Activated CD4-positive, alpha-beta T cell treated with anti-CD3 and anti-CD28 coated beads for 36 hours (primary cell): ENCODE measurements at regions of chr16 and their contacts with region 1.

Region 1: GRCh38 chr16:56450986-56451752 is at the starts of genes NUDT21 and OGFOD1:
- DNase-seq: peak; percentile 95
- ATAC-seq: peak; percentile 97
- H3K4me3 Mint-ChIP-seq: peak within 1 kb of the TSS; percentile 84
- H3K27ac Mint-ChIP-seq: peak within 1 kb of the TSS; percentile 93
- H3K4me1 Mint-ChIP-seq: peaks cover 51% of the 10 kb centered on the region
- H3K27me3 Mint-ChIP-seq: no peaks in the 10 kb centered on the region
- total RNA-seq, gene NUDT21: 333 to 349 TPM
- total RNA-seq, gene OGFOD1: 56.2 to 64.1 TPM

Region 2: GRCh38 chr16:56356276-56357240 is 94.6 kb before region 1 on chr16:
- CTCF ChIA-PET with region 1: interaction called, 3 read pairs
- POLR2A ChIA-PET with region 1: no interaction called
- intact Hi-C with region 1: loop called (anchors 1 kb)
- DNase-seq: peak; percentile 77
- ATAC-seq: peak; percentile 84
- H3K4me3 Mint-ChIP-seq: peak overlapping the region; percentile 78
- H3K27ac Mint-ChIP-seq: peak overlapping the region; percentile 98
- H3K4me1 Mint-ChIP-seq: peaks cover 29% of the 10 kb centered on the region
- H3K27me3 Mint-ChIP-seq: no peaks in the 10 kb centered on the region

Region 3: DNA sequence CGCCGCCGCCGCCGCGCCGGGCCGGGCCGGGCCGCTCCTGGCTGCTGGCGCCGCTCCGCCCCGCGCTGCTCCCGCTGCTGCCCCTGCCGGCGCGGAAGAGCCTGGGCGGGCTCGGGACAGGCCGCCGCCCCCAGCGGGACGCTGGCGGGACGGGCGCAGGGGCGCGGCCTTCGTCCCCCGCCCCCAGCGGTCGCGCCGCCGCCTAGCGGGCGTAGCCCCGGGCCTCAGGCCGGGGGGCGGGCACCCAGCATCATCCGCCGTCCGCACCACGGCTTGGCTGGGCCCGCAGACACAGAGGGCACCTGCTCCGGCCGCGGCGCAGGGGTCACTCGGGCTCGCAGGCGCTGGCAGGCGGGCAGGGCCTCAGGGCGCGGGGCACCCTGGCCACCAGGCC is 25.7 kb before region 1 on chr16 and contains the start of gene AMFR:
- CTCF ChIA-PET with region 1: interaction called, 9 read pairs
- POLR2A ChIA-PET with region 1: interaction called, 6 read pairs
- intact Hi-C with region 1: loop called (anchors 1 kb)
- DNase-seq: peak; percentile 80
- ATAC-seq: peak; percentile 97
- H3K4me3 Mint-ChIP-seq: peak within 1 kb of the TSS; percentile 90
- H3K27ac Mint-ChIP-seq: peak within 1 kb of the TSS; percentile 82
- H3K4me1 Mint-ChIP-seq: peaks cover 54% of the 10 kb centered on the region
- H3K27me3 Mint-ChIP-seq: no peaks in the 10 kb centered on the region
- total RNA-seq, gene AMFR: 34.0 to 48.0 TPM

Region 4: GRCh38 chr16:56477096-56477878 is 26.1 kb after region 1 on chr16:
- CTCF ChIA-PET with region 1: no interaction called
- POLR2A ChIA-PET with region 1: interaction called, 8 read pairs
- intact Hi-C with region 1: loop called in 1 of 2 experiments (anchors 2 kb)
- DNase-seq: peak; percentile 38
- ATAC-seq: peak; percentile 90
- H3K4me3 Mint-ChIP-seq: no peak overlapping the region
- H3K27ac Mint-ChIP-seq: peak overlapping the region; percentile 78
- H3K4me1 Mint-ChIP-seq: peaks cover 24% of the 10 kb centered on the region
- H3K27me3 Mint-ChIP-seq: no peaks in the 10 kb centered on the region

Region 5: DNA sequence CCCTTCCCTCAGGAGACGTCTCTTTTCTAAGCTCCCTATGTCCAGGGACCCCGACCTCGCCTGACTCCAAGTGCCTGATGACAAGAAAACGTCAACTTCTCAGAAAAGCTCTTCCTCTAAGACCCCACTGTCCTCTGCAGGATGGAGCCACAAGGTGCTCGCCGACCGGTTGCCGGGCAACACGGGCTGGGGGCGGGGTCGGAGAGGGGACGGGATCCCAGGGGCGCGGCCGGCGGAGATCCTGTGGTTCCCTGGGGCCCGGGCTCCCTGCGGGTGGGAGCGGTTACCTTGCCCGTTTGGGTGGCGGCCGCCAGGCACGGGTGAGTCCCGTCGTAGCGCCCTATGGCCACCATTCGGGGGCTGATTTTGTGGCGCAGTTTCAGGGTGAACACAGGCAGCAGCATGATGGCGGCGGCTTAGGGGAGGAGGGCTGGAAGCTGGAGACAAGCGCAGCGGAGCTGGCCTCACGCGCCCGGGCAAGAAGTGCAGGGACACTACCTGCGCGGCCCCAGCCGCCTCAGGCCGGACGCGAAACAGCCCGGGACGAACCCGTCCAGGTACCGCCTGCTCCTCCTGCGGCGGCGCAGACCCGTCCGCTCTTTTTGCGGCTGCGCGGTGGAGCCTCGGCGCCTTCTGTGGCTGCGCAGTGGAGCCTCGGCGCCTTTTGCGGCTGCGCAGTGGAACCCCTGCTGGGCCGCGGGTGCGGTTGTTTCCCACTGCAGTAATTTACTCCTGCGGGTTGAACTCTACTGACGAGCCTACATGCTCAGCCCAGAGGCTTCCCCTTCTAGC is 68.5 kb after region 1 on chr16 and contains the start of gene BBS2:
- CTCF ChIA-PET with region 1: no interaction called
- POLR2A ChIA-PET with region 1: interaction called, 8 read pairs
- intact Hi-C with region 1: loop called in 1 of 2 experiments (anchors 1 kb)
- DNase-seq: peak; percentile 93
- ATAC-seq: peak; percentile 90
- H3K4me3 Mint-ChIP-seq: peak within 1 kb of the TSS; percentile 79
- H3K27ac Mint-ChIP-seq: peak within 1 kb of the TSS; percentile 61
- H3K4me1 Mint-ChIP-seq: peaks cover 32% of the 10 kb centered on the region
- H3K27me3 Mint-ChIP-seq: no peaks in the 10 kb centered on the region
- total RNA-seq, gene BBS2: 15.4 to 23.2 TPM

Region 6: GRCh38 chr16:56729735-56730662 is 278.8 kb after region 1 on chr16 and contains the start of gene NUP93:
- CTCF ChIA-PET with region 1: interaction called, 3 read pairs
- POLR2A ChIA-PET with region 1: no interaction called
- intact Hi-C with region 1: loop called in 1 of 2 experiments (anchors 1 kb)
- DNase-seq: peak; percentile 95
- ATAC-seq: peak; percentile 83
- H3K4me3 Mint-ChIP-seq: no peak within 1 kb of the TSS
- H3K27ac Mint-ChIP-seq: peak within 1 kb of the TSS; percentile 85
- H3K4me1 Mint-ChIP-seq: peaks cover 14% of the 10 kb centered on the region
- H3K27me3 Mint-ChIP-seq: no peaks in the 10 kb centered on the region
- total RNA-seq, gene NUP93: 131 to 154 TPM

Region 7: DNA sequence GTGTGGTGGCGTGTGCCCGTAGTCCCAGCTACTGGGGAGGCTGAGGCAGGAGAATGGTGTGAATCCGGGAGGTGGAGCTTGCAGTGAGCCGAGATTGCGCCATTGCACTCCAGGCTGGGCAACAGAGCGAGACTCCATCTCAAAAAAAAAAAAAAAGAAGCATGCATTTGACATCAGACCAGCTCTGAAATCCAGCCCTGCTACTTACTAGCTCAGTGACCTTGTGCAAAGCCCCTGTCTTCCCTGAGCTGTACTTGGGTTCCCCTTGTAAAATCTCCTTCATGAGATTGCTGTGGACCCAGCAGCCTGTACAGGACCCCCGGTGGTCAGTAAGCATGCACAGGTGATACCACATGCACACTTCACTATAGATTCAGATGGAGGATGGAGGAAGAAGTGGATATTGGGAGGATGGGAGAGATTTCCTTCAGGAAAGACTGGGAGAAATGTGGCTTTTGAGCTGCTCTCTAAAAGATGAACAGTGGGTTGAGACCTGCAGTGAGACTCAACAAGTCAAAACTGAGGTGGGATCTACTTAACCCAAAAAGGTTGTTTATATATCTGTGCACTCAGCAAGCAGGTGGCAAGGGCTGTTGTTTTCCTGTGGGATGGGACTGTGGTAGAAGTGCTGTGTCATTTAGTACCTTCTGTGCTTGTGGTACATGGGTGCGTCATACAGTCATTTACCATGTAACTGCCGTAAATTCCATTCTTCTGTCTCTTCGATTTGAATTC is 487.4 kb after region 1 on chr16:
- CTCF ChIA-PET with region 1: no interaction called
- POLR2A ChIA-PET with region 1: interaction called, 7 read pairs
- intact Hi-C with region 1: loop called (anchors 2 kb)
- DNase-seq: peak; percentile 78
- ATAC-seq: peak; percentile 81
- H3K4me3 Mint-ChIP-seq: peak overlapping the region; percentile 70
- H3K27ac Mint-ChIP-seq: peak overlapping the region; percentile 95
- H3K4me1 Mint-ChIP-seq: peaks cover 90% of the 10 kb centered on the region
- H3K27me3 Mint-ChIP-seq: no peaks in the 10 kb centered on the region